H1 (cell line): ENCODE measurements at regions of chr3 and their contacts with region 1.

Region 1: DNA sequence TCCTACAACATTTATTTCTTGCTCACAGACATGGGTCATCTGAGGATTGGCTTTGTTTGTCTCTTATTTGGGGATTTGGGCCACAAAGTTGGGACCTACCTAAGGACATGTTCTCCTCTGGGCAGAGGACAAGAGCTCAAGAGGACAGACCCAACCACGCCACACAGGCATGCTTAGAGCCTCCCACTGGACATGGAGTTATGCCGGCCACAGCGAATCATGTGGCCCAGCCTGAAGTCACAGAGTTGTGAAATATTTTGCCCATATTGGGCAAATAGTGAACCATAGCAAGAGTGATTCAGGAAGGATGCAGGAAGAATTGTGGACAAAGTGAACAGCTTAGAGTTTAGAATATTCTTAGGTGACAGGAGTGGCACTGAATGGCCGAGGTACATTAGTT is 9.9 kb downstream of the TRAK1 start:
- DNase-seq: no peak
- H3K4me3 ChIP-seq: no peak overlapping the region
- H3K27ac ChIP-seq: no peak overlapping the region
- H3K4me1 ChIP-seq: peaks cover 0 to 7% (median 3%) of the 10 kb centered on the region in 4 experiments; a peak in 3 of 7 replicates
- H3K27me3 ChIP-seq: no peaks in the 10 kb centered on the region
- CTCF ChIP-seq: no peak
- EP300 ChIP-seq: no peak
- POLR2A ChIP-seq: no peak
- RAD21 ChIP-seq: no peak

Region 2: DNA sequence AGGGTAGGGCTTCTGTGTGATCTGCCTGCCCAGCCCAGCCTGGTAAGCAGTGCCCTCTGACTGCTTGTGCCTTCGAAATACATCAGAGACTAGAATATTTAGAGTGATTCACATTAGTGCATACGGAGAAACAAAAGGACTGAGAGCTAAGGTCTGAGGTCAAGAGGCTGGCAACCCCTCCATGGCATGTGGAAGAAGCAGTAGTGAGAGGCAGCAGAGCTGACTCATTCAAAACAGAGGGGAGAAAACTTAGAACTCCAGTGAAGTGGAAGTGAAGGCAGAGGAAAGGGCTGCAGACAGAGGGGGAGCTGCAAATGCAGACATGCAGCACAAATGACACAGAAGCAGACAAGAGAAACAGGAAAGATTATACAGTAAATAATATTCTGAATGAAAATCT is 200.8 kb before region 1 on chr3:
- CTCF ChIA-PET with region 1: interaction called, 40 read pairs
- POLR2A ChIA-PET with region 1: no interaction called
- DNase-seq: no peak
- H3K4me3 ChIP-seq: no peak overlapping the region
- H3K27ac ChIP-seq: no peak overlapping the region
- H3K4me1 ChIP-seq: no peaks in the 10 kb centered on the region
- H3K27me3 ChIP-seq: no peaks in the 10 kb centered on the region
- CTCF ChIP-seq: no peak
- EP300 ChIP-seq: no peak
- POLR2A ChIP-seq: no peak
- RAD21 ChIP-seq: no peak

Region 3: DNA sequence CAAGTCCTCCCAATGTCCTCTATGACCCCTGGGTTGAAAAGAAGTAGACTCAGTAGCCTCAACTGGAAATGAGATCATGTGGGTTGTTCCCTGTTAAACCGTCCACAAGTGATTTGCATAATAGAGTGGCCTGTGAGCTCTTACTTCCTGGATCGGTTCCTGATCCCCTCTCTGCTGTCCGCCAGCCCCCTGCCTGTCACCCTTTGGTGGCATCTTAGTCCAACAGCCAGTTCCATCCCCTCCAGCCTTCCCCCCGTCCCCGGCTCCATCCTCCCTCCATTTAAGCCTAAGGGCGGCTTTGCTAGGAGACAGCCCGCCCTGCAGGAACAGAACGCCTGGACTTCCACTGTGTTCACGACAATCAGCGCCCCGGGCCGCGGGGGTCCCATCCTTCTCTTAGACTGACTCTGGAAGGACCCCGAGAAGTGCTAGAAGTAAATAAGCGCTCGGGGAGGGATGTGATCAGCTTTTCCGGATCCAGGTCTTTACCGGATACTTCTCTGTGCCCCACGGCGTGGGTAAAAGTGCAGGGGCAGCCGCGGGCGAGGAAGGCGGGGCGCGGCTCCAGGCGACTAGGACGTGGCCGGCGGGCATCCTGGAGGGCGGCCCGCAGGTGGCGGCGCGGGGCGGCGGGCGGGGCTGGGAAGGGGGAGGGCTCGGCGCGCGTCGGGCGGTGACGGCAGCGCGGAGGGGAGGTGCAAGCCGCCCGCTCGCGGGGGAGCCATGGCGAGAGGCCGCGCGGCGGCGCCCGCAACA is 87.9 kb before region 1 on chr3:
- CTCF ChIA-PET with region 1: interaction called, 35 read pairs
- POLR2A ChIA-PET with region 1: interaction called, 7 read pairs
- DNase-seq: peak in 1 of 2 experiments; percentile 72
- H3K4me3 ChIP-seq: peak overlapping the region; percentile 75 to 95 (median 80)
- H3K27ac ChIP-seq: no peak overlapping the region
- H3K4me1 ChIP-seq: peaks cover 5 to 7% (median 6%) of the 10 kb centered on the region in 4 experiments; a peak in 6 of 7 replicates
- H3K27me3 ChIP-seq: peaks cover 0 to 7% (median 4%) of the 10 kb centered on the region in 4 experiments; a peak in 4 of 7 replicates
- CTCF ChIP-seq: no peak; a peak in 1 of 4 replicates
- EP300 ChIP-seq: no peak
- POLR2A ChIP-seq: peak in 1 of 2 experiments; percentile 23; a peak in 1 of 3 replicates
- RAD21 ChIP-seq: no peak

Region 4: GRCh38 chr3:42061713-42062408 is 39.2 kb before region 1 on chr3:
- CTCF ChIA-PET with region 1: interaction called, 11 read pairs
- POLR2A ChIA-PET with region 1: no interaction called
- DNase-seq: no peak
- H3K4me3 ChIP-seq: no peak overlapping the region
- H3K27ac ChIP-seq: no peak overlapping the region; the same call in 1 of the 2 replicates
- H3K4me1 ChIP-seq: peaks cover 13 to 31% (median 26%) of the 10 kb centered on the region in 4 experiments
- H3K27me3 ChIP-seq: no peaks in the 10 kb centered on the region
- CTCF ChIP-seq: no peak
- EP300 ChIP-seq: no peak
- POLR2A ChIP-seq: 0 out of 3 replicates have a peak, but pooled peaks of 1 of the 2 experiments have one; percentile 30
- RAD21 ChIP-seq: no peak

Region 5: GRCh38 chr3:42118762-42119361 is 17.8 kb after region 1 on chr3:
- CTCF ChIA-PET with region 1: interaction called, 16 read pairs
- POLR2A ChIA-PET with region 1: no interaction called
- DNase-seq: peak in 1 of 2 experiments; percentile 19
- H3K4me3 ChIP-seq: no peak overlapping the region
- H3K27ac ChIP-seq: no peak overlapping the region
- H3K4me1 ChIP-seq: peaks cover 2 to 5% (median 4%) of the 10 kb centered on the region in 4 experiments; a peak in 6 of 7 replicates
- H3K27me3 ChIP-seq: no peaks in the 10 kb centered on the region
- CTCF ChIP-seq: peak; percentile 74 to 83 (median 78)
- EP300 ChIP-seq: no peak
- POLR2A ChIP-seq: no peak
- RAD21 ChIP-seq: peak; percentile 82 to 86